A673 (cell line): ENCODE measurements at regions of chr2 and their contacts with region 1.

Region 1: GRCh38 chr2:176830362-176830761 is 382.2 kb upstream of the HNRNPA3 start:
- DNase-seq: peak; percentile 81
- H3K4me3 ChIP-seq: no peak overlapping the region
- H3K27ac ChIP-seq: no peak overlapping the region
- H3K4me1 ChIP-seq: peaks cover 8% of the 10 kb centered on the region
- H3K27me3 ChIP-seq: no peaks in the 10 kb centered on the region
- CTCF ChIP-seq: peak; percentile 66

Region 2: GRCh38 chr2:175010848-175011254 is 1819.5 kb before region 1 on chr2:
- CTCF ChIA-PET with region 1: no interaction called
- POLR2A ChIA-PET with region 1: interaction called, 10 read pairs
- intact Hi-C with region 1: no loop called
- DNase-seq: peak; percentile 76
- H3K4me3 ChIP-seq: no peak overlapping the region
- H3K27ac ChIP-seq: no peak overlapping the region
- H3K4me1 ChIP-seq: peaks cover 15% of the 10 kb centered on the region
- H3K27me3 ChIP-seq: peaks cover 35% of the 10 kb centered on the region
- CTCF ChIP-seq: no peak

Region 3: DNA sequence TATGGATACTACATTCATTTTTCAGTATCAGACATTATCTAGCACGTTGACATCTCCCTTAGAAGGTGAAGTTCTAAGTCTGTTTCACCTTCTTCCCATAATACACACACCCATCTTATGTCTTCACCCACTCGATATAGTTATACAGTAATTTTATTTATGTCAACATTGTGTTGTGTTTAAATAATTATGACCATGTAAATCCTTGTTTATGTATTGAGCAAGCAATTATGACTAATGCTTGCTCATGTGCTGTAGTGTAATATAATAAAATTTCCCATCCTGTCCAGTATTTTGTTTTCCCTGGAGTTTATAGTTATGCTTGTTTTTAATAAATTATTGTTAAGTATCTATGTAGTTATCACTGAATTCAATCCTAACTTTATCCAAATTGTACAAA is 397.9 kb before region 1 on chr2:
- CTCF ChIA-PET with region 1: no interaction called
- POLR2A ChIA-PET with region 1: no interaction called
- intact Hi-C with region 1: no loop called
- DNase-seq: no peak
- H3K4me3 ChIP-seq: no peak overlapping the region
- H3K27ac ChIP-seq: no peak overlapping the region
- H3K4me1 ChIP-seq: no peaks in the 10 kb centered on the region
- H3K27me3 ChIP-seq: no peaks in the 10 kb centered on the region
- CTCF ChIP-seq: no peak

Region 4: DNA sequence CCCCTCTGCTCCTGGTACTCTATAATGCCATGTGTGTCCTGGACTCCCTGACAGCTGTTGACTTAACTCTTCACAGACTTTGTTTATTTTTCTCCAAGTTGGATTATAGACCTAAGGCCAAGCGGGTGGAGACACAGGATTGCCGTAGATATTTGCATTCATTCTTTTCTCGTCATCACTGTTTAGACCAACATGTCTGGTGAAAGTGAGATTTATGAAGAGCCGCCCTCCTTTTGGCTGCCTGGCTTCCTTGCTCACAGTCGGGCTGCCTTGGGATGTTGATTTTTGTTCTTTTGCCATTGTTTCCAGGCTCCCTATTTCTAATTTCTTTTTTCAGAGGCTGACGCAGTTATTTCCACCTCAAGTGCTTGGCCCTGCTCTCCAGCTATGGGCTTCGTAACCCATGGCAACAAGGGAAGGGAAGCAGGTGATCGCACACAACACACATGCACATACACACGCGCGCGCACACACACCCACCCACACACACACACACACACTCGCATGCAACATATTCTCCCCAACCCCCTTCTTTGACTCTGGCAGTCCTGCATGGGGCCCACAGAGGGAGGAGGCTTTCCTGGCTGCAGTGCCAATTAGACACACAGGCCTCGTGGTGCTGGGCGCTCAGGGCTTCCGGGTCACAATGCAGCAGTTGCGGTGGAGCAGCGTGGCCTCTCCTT is 264.6 kb before region 1 on chr2:
- CTCF ChIA-PET with region 1: no interaction called
- POLR2A ChIA-PET with region 1: no interaction called
- intact Hi-C with region 1: no loop called
- DNase-seq: no peak
- H3K4me3 ChIP-seq: no peak overlapping the region
- H3K27ac ChIP-seq: no peak overlapping the region
- H3K4me1 ChIP-seq: peaks cover 21% of the 10 kb centered on the region
- H3K27me3 ChIP-seq: no peaks in the 10 kb centered on the region
- CTCF ChIP-seq: no peak

Region 5: GRCh38 chr2:176768222-176768621 is 62.1 kb before region 1 on chr2:
- CTCF ChIA-PET with region 1: no interaction called
- POLR2A ChIA-PET with region 1: no interaction called
- intact Hi-C with region 1: no loop called
- DNase-seq: no peak
- H3K4me3 ChIP-seq: no peak overlapping the region
- H3K27ac ChIP-seq: no peak overlapping the region
- H3K4me1 ChIP-seq: peaks cover 32% of the 10 kb centered on the region
- H3K27me3 ChIP-seq: no peaks in the 10 kb centered on the region
- CTCF ChIP-seq: no peak

Region 6: GRCh38 chr2:176924909-176925534 is 94.7 kb after region 1 on chr2:
- CTCF ChIA-PET with region 1: no interaction called
- POLR2A ChIA-PET with region 1: no interaction called
- intact Hi-C with region 1: no loop called
- DNase-seq: no peak
- H3K4me3 ChIP-seq: no peak overlapping the region
- H3K27ac ChIP-seq: no peak overlapping the region
- H3K4me1 ChIP-seq: no peaks in the 10 kb centered on the region
- H3K27me3 ChIP-seq: no peaks in the 10 kb centered on the region
- CTCF ChIP-seq: no peak

Region 7: GRCh38 chr2:177056481-177056929 is 226.1 kb after region 1 on chr2:
- CTCF ChIA-PET with region 1: no interaction called
- POLR2A ChIA-PET with region 1: no interaction called
- intact Hi-C with region 1: loop called (anchors 5 kb)
- DNase-seq: peak; percentile 23
- H3K4me3 ChIP-seq: no peak overlapping the region
- H3K27ac ChIP-seq: no peak overlapping the region
- H3K4me1 ChIP-seq: no peaks in the 10 kb centered on the region
- H3K27me3 ChIP-seq: no peaks in the 10 kb centered on the region
- CTCF ChIP-seq: peak; percentile 49